AG04449 (cell line): ENCODE measurements at regions of chr12 and their contacts with region 1.

Region 1: GRCh38 chr12:71420775-71421406 is 18.7 kb upstream of the LGR5 start:
- DNase-seq: no peak
- H3K4me3 ChIP-seq: no peak overlapping the region
- CTCF ChIP-seq: no peak

Region 2: DNA sequence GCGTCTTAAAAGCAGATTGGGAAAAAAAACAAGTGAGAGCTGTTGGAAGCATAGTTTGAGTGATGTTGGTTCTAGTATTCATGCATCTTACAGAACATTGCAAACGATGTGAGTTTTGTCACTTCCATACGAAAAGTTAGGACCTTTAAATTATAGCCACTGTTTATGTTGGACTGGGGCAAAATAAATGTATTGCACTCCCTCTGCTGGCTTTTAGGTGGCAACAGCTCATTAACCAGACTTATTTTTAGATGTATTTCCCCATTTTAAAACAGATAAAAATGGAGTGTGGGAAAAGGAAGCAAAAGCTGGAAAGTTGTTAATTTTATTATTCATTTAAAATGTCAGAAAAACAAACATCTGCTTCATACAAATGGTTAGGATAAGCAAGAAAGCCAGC is 130.6 kb after region 1 on chr12:
- CTCF ChIA-PET with region 1: interaction called, 141 read pairs
- POLR2A ChIA-PET with region 1: no interaction called
- DNase-seq: no peak
- H3K4me3 ChIP-seq: no peak overlapping the region
- CTCF ChIP-seq: peak; percentile 47